ENCODE measurements at regions of chr4 and their contacts with region 1.

Region 1: GRCh38 chr4:119314356-119314755 is 7.6 kb downstream of the FABP2 start:
- DNase-seq: no peak
- ATAC-seq: peak; percentile 83

Region 2: DNA sequence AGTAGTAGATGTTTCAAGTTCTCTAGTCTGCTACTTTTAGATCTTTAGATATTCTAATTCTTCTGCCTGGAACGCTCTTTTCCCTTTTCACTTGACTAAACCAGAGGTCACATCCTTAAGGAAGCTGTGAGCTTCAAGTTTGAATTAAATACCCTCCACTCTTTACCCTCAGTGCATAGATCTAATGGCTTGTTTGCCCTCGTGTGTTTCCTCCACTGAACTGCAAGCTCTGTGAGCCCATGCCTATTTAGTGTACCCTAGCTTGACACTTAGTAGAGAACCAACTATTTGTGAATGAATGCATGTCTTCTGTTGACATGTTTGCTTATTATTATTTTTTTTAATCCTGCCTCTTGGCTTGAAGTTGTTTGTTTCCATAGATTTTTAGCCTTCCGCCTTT is 176.0 kb after region 1 on chr4:
- intact Hi-C with region 1: loop called (anchors 10 kb)
- DNase-seq: no peak
- ATAC-seq: peak; percentile 45

Region 3: GRCh38 chr4:120105472-120105871 is 791.1 kb after region 1 on chr4:
- intact Hi-C with region 1: no loop called
- DNase-seq: no peak
- ATAC-seq: no peak